GM23248 (cell line): ENCODE measurements at regions of chr7 and their contacts with region 1.

Region 1: GRCh38 chr7:18570890-18571478 is 75.4 kb downstream of the HDAC9 start:
- DNase-seq: peak; percentile 75
- H3K4me3 ChIP-seq: no peak overlapping the region
- H3K27ac ChIP-seq: no peak overlapping the region
- H3K4me1 ChIP-seq: no peaks in the 10 kb centered on the region
- H3K27me3 ChIP-seq: no peaks in the 10 kb centered on the region

Region 2: DNA sequence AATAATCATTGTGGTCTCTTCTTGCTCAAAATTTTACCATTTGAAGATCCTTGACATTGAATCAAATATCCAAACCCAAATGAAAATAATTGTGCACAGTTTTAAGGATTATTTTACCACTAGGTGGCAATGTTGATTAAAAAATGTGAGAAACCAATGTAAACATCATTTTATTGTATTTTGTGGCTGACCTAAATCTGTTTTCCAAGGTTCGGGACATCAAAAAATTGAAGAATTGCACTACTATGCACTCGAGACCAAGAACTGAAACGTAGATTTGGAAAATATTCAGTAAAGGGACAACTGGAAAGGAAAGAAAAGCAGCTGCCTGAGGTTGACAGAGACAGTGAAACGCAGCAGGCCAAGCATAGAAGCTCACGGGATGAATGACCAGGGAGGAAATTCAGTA is 890.0 kb before region 1 on chr7:
- in situ Hi-C with region 1: loop called (anchors 25 kb)
- DNase-seq: peak; percentile 65
- H3K4me3 ChIP-seq: peak overlapping the region; percentile 54
- H3K27ac ChIP-seq: peak overlapping the region; percentile 82
- H3K4me1 ChIP-seq: peaks cover 78% of the 10 kb centered on the region
- H3K27me3 ChIP-seq: no peaks in the 10 kb centered on the region

Region 3: GRCh38 chr7:17952387-17952786 is 618.6 kb before region 1 on chr7:
- in situ Hi-C with region 1: loop called (anchors 25 kb)
- DNase-seq: no peak
- H3K4me3 ChIP-seq: no peak overlapping the region
- H3K27ac ChIP-seq: no peak overlapping the region
- H3K4me1 ChIP-seq: peaks cover 5% of the 10 kb centered on the region; the same call in 1 of the 2 replicates
- H3K27me3 ChIP-seq: no peaks in the 10 kb centered on the region

Region 4: DNA sequence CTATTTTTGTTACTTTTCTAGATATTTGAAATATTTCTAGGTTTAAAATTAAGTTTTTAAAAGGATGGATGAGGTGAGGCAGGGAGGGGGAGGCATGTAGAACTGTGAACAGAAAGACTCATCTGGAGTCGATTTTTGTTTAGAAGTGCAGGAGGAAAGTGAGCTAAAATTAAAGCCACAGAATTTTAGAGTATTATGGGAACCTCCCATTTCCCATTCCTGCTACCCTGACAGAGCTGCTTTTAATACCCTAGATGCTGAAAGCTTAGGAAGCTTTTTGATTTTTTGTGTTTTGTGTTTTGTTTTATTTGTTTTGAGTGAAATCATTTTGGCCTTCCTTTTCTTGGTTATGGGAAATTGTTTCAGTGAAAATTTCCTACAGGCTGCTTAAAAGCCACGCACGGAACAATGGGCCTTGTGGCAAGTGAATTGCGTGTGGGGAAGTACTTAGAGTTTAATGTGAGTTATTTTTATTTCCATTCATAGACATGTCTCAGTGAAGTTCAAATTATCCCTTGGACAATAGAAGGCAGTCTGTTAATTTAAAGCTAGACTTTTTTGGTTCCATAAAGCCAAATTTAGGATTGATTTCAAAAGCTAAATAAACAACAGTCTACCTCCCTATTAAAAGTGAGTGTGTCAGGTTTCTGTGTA is 177.4 kb before region 1 on chr7:
- in situ Hi-C with region 1: no loop called
- DNase-seq: no peak
- H3K4me3 ChIP-seq: no peak overlapping the region
- H3K27ac ChIP-seq: no peak overlapping the region
- H3K4me1 ChIP-seq: peaks cover 14% of the 10 kb centered on the region; the same call in 1 of the 2 replicates
- H3K27me3 ChIP-seq: no peaks in the 10 kb centered on the region